Activated CD4-positive, alpha-beta T cell treated with anti-CD3 and anti-CD28 coated beads for 36 hours (primary cell): ENCODE measurements at regions of chr18 and their contacts with region 1.

Region 1: GRCh38 chr18:13611601-13612195 is 114.7 kb downstream of the FAM210A start:
- DNase-seq: peak; percentile 46
- ATAC-seq: peak; percentile 4
- H3K4me3 Mint-ChIP-seq: peak overlapping the region; percentile 72
- H3K27ac Mint-ChIP-seq: peak overlapping the region; percentile 87
- H3K4me1 Mint-ChIP-seq: peaks cover 84% of the 10 kb centered on the region
- H3K27me3 Mint-ChIP-seq: no peaks in the 10 kb centered on the region

Region 2: DNA sequence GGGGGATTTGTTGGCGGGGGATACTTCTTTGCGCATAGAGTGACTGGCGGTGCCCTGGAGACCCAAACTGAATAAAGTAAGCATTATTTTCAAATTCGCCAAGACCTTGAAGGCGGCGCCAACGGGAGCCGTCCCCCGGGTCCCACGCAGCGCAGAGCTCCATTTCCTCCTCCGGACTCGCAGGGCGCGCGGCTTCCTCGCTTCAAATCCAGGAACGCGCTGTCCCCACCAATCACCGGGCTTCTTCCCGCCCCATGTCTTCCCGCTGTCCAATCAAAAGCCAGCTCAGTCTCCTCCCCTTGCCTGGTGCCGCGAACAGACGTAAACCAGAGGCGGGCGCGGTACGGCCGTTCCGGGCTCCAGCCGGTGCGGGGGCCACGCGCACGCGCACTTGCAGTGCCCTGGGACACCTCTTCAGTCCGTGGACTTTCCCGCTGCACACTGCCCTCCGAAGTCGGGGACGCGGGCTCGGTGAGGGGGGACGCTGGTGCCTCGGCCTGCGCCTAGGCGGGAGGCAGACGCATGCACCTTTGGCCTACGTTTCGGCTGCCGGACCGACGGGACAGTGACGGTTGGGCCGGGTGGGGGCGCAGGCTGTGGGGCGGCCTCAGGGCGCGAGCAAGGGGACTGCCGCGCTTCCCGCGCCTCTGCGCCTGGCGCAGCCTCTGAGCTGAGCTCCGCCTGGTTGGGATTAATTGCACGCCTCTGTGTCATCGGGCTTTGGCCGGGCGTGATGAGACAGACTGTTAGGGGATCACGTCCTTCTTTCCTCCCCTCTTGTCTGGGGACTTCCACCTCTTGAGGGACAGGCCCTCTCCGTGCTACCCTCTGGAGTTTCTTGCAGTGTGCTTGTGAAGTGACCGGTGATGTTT is 620.5 kb before region 1 on chr18 and contains the start of gene CEP192:
- CTCF ChIA-PET with region 1: no interaction called
- POLR2A ChIA-PET with region 1: no interaction called
- intact Hi-C with region 1: loop called in 1 of 2 experiments (anchors 10 kb)
- DNase-seq: peak; percentile 98
- ATAC-seq: peak; percentile 90
- H3K4me3 Mint-ChIP-seq: peak within 1 kb of the TSS; percentile 87
- H3K27ac Mint-ChIP-seq: peak within 1 kb of the TSS; percentile 93
- H3K4me1 Mint-ChIP-seq: peaks cover 21% of the 10 kb centered on the region
- H3K27me3 Mint-ChIP-seq: no peaks in the 10 kb centered on the region
- total RNA-seq, gene CEP192: 36.0 to 39.3 TPM

Region 3: GRCh38 chr18:13375302-13376255 is 236.1 kb before region 1 on chr18:
- CTCF ChIA-PET with region 1: no interaction called
- POLR2A ChIA-PET with region 1: interaction called, 6 read pairs
- intact Hi-C with region 1: loop called (anchors 2 to 5 kb)
- DNase-seq: peak; percentile 91
- ATAC-seq: peak; percentile 73
- H3K4me3 Mint-ChIP-seq: peak overlapping the region; percentile 63
- H3K27ac Mint-ChIP-seq: peak overlapping the region; percentile 97
- H3K4me1 Mint-ChIP-seq: peaks cover 84% of the 10 kb centered on the region
- H3K27me3 Mint-ChIP-seq: no peaks in the 10 kb centered on the region

Region 4: DNA sequence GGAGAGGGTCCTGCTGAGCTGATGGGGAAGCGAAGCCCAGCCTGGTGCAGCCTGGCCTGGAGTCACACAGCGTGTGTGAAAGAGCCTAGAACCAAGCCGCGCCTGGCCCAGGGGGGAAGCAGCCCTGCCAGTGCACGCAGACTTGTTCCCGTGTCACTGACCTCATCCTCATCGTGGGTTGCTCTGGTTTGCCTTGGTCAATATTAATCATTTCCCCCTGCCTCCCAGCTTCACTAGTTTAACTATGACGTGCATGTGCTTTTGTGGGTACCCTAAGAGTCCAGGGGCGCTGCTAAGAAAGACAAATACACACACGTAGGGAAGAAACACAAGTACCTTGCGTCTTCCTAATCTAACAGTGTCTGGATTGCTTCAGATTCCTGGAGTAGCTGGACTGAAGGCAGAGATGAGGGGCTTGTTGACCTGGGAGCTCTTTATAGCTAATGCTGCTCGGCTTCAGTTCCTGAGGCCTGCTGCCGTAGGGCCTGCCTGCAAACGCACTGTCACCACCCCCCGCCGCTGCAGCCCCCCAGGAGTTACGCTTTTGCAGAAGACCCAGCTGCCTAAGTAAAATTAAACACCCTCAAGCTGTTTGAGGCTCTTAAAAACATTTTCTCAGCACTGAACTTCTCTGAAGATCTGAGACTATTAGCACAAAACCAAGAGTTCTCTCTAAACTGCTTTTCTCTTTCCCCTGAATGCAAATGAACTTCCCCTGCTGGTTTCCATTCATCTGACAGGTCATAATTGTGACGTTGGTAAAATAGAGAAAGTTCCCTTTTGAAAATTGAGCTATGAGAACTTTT is 44.6 kb before region 1 on chr18:
- CTCF ChIA-PET with region 1: interaction called, 30 read pairs
- POLR2A ChIA-PET with region 1: interaction called, 13 read pairs
- intact Hi-C with region 1: loop called (anchors 1 kb)
- DNase-seq: peak; percentile 62
- ATAC-seq: peak; percentile 37
- H3K4me3 Mint-ChIP-seq: peak overlapping the region; percentile 39
- H3K27ac Mint-ChIP-seq: peak overlapping the region; percentile 86
- H3K4me1 Mint-ChIP-seq: peaks cover 82% of the 10 kb centered on the region
- H3K27me3 Mint-ChIP-seq: no peaks in the 10 kb centered on the region

Region 5: GRCh38 chr18:13577091-13577697 is 34.5 kb before region 1 on chr18:
- CTCF ChIA-PET with region 1: interaction called, 5 read pairs
- POLR2A ChIA-PET with region 1: interaction called, 17 read pairs
- intact Hi-C with region 1: no loop called
- DNase-seq: peak; percentile 73
- ATAC-seq: peak; percentile 90
- H3K4me3 Mint-ChIP-seq: peak overlapping the region; percentile 22
- H3K27ac Mint-ChIP-seq: peak overlapping the region; percentile 55
- H3K4me1 Mint-ChIP-seq: peaks cover 47% of the 10 kb centered on the region
- H3K27me3 Mint-ChIP-seq: no peaks in the 10 kb centered on the region

Region 6: GRCh38 chr18:13585379-13586153 is 26.1 kb before region 1 on chr18:
- CTCF ChIA-PET with region 1: interaction called, 5 read pairs
- POLR2A ChIA-PET with region 1: interaction called, 4 read pairs
- intact Hi-C with region 1: loop called in 1 of 2 experiments (anchors 1 kb)
- DNase-seq: no peak
- ATAC-seq: no peak
- H3K4me3 Mint-ChIP-seq: no peak overlapping the region
- H3K27ac Mint-ChIP-seq: peak overlapping the region; percentile 35
- H3K4me1 Mint-ChIP-seq: peaks cover 56% of the 10 kb centered on the region
- H3K27me3 Mint-ChIP-seq: no peaks in the 10 kb centered on the region